BJ (cell line): ENCODE measurements at regions of chr6 and their contacts with region 1.

Region 1: DNA sequence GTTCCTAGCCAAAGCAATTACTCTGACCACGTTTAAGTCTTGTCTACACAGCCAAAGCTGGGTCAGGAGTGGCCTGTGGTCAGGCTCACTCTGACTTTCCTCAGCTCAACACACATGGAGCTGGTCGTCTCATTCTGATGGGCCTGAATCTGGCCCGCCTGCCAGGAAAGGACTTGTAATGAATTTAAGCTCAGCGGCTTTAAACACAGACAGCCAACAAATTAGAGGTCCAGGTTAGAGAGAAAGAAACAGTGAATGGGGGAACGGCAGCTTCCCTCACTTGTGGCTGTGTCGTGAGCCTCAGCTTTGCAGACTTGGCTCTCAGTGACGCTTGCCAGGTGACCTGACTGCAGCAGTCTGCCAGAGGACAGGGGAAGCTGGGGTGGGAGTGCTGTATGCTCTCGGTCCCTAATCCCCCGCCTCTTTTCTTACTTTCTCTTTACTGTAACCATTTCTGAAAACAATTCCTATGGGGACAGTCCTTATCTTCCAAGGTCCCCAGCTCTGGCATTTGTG is 121.9 kb upstream of the AGPAT4 start:
- DNase-seq: no peak
- H3K4me3 ChIP-seq: no peak overlapping the region
- H3K27me3 ChIP-seq: peaks cover 5% of the 10 kb centered on the region
- CTCF ChIP-seq: no peak

Region 2: DNA sequence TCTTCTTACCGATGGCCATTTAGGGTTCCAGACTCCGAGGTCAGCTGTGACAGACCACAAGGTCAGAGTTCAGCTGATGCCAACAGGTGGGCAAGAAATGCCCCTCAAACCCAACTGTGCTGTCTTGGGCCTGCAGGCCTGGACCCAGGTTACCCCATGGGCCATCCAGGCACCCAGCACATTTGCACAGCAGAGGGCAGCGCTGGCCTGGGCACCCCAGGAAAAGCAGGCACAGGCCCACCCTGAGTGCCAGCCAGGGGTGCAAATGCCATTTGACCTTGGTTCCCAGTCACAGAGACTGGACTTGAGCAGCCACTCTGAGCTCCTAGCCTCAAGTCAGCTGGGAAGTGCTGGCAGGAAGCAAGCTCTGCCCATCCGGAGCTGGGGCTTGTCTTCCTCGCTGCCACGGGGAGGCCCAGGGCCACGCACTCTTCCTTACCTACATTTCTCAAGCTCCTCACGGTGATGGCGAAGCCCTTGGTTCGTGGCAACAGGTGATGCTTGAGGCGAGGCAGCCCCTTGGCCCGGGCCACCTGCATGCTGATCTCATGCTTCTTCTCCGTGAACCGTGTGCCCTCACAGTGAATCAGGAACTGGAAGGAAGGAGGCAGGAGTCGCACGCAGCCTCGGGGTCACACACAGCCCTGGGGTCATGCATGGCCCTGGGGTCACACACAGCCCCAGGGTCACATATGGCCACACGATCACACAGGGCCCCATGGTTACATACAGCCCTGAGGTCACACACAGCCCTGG is 242.7 kb before region 1 on chr6:
- CTCF ChIA-PET with region 1: no interaction called
- POLR2A ChIA-PET with region 1: no interaction called
- DNase-seq: no peak
- H3K4me3 ChIP-seq: no peak overlapping the region
- H3K27me3 ChIP-seq: no peaks in the 10 kb centered on the region
- CTCF ChIP-seq: peak; percentile 62

Region 3: DNA sequence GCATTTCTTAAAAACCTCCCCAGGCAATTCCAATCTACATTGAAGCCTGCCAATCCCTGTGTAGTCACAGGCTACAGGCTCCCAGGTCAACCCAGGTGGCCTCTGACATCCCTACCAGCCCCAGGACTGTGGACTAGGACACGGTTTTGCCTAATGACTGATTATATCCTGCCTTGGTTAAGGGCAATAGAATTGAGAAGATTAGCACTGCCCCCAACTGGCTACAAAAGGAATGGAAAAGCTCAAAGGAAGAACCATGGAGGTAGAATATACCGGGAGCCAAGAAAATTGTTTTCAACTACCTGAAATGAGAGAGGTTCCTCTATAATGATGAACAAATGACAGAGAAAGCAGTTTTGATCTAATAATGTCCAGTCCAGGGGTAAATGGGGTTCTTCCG is 299.2 kb after region 1 on chr6:
- CTCF ChIA-PET with region 1: interaction called, 11 read pairs
- POLR2A ChIA-PET with region 1: no interaction called
- DNase-seq: no peak
- H3K4me3 ChIP-seq: no peak overlapping the region
- H3K27me3 ChIP-seq: no peaks in the 10 kb centered on the region
- CTCF ChIP-seq: peak; percentile 53